Caco-2 (cell line): ENCODE measurements at regions of chr1 and their contacts with region 1.

Region 1: GRCh38 chr1:158458263-158458662 is 3.4 kb upstream of the OR10K1 start:
- DNase-seq: no peak
- H3K4me3 ChIP-seq: no peak overlapping the region
- H3K4me3 Mint-ChIP-seq: no peak overlapping the region
- H3K27ac Mint-ChIP-seq: no peak overlapping the region
- H3K4me1 ChIP-seq: no peaks in the 10 kb centered on the region
- H3K4me1 Mint-ChIP-seq: no peaks in the 10 kb centered on the region
- H3K27me3 ChIP-seq: no peaks in the 10 kb centered on the region
- H3K27me3 Mint-ChIP-seq: no peaks in the 10 kb centered on the region
- CTCF ChIP-seq: no peak

Region 2: GRCh38 chr1:158445376-158445775 is 12.9 kb before region 1 on chr1:
- CTCF ChIA-PET with region 1: no interaction called
- POLR2A ChIA-PET with region 1: no interaction called
- intact Hi-C with region 1: no loop called
- DNase-seq: no peak
- H3K4me3 ChIP-seq: no peak overlapping the region
- H3K4me3 Mint-ChIP-seq: no peak overlapping the region
- H3K27ac Mint-ChIP-seq: no peak overlapping the region
- H3K4me1 ChIP-seq: no peaks in the 10 kb centered on the region
- H3K4me1 Mint-ChIP-seq: no peaks in the 10 kb centered on the region
- H3K27me3 ChIP-seq: no peaks in the 10 kb centered on the region
- H3K27me3 Mint-ChIP-seq: no peaks in the 10 kb centered on the region
- CTCF ChIP-seq: no peak

Region 3: GRCh38 chr1:158506369-158506987 is 48.2 kb after region 1 on chr1:
- CTCF ChIA-PET with region 1: no interaction called
- POLR2A ChIA-PET with region 1: no interaction called
- intact Hi-C with region 1: no loop called
- DNase-seq: peak; percentile 37 to 41
- H3K4me3 ChIP-seq: no peak overlapping the region
- H3K4me3 Mint-ChIP-seq: no peak overlapping the region
- H3K27ac Mint-ChIP-seq: no peak overlapping the region
- H3K4me1 ChIP-seq: no peaks in the 10 kb centered on the region
- H3K4me1 Mint-ChIP-seq: no peaks in the 10 kb centered on the region
- H3K27me3 ChIP-seq: no peaks in the 10 kb centered on the region; the same call in 1 of the 2 replicates
- H3K27me3 Mint-ChIP-seq: peaks cover 2% of the 10 kb centered on the region
- CTCF ChIP-seq: peak; percentile 29 to 36

Region 4: DNA sequence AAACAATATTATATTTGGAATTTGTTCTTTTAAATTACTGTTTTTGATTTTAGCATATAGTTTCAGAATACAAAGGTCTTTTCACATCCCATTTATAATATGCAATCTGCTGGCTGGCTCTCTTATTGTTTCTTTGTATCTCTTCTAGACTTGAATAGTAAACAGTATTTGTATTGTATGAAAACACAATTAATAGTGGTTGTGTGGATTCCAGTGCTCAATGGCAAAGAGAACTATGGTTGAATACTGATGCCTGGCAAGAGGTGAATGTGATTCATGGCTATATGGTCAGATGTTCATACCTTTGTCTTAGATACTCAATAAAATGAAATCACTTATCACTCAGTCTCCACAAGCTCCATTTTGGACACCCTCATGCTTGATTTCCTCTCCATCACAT is 58.7 kb after region 1 on chr1:
- CTCF ChIA-PET with region 1: no interaction called
- POLR2A ChIA-PET with region 1: no interaction called
- intact Hi-C with region 1: no loop called
- DNase-seq: no peak
- H3K4me3 ChIP-seq: no peak overlapping the region
- H3K4me3 Mint-ChIP-seq: no peak overlapping the region
- H3K27ac Mint-ChIP-seq: no peak overlapping the region
- H3K4me1 ChIP-seq: no peaks in the 10 kb centered on the region
- H3K4me1 Mint-ChIP-seq: no peaks in the 10 kb centered on the region
- H3K27me3 ChIP-seq: no peaks in the 10 kb centered on the region
- H3K27me3 Mint-ChIP-seq: peaks cover 5% of the 10 kb centered on the region
- CTCF ChIP-seq: no peak

Region 5: DNA sequence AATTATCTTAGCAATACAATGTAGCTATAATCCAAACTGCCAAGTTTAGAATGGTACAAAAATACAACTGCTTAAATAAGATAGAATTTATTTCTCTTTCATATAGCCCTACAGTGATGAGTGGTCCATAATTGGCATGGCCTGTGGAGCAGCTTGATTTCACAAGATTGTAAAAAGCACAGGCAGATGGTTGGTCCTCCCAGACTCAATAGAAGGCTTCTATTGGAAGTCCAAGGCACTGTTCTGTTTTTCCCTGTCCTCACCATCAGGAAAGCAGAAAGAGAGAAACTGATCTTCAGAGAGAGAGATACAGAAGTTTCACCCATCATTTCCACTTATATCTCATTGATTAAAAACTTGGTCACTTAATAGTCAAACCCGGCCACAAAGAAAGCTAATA is 114.0 kb after region 1 on chr1:
- CTCF ChIA-PET with region 1: no interaction called
- POLR2A ChIA-PET with region 1: no interaction called
- intact Hi-C with region 1: no loop called
- DNase-seq: no peak
- H3K4me3 ChIP-seq: no peak overlapping the region
- H3K4me3 Mint-ChIP-seq: no peak overlapping the region
- H3K27ac Mint-ChIP-seq: no peak overlapping the region
- H3K4me1 ChIP-seq: no peaks in the 10 kb centered on the region
- H3K4me1 Mint-ChIP-seq: no peaks in the 10 kb centered on the region
- H3K27me3 ChIP-seq: no peaks in the 10 kb centered on the region
- H3K27me3 Mint-ChIP-seq: peaks cover 4% of the 10 kb centered on the region
- CTCF ChIP-seq: no peak

Region 6: DNA sequence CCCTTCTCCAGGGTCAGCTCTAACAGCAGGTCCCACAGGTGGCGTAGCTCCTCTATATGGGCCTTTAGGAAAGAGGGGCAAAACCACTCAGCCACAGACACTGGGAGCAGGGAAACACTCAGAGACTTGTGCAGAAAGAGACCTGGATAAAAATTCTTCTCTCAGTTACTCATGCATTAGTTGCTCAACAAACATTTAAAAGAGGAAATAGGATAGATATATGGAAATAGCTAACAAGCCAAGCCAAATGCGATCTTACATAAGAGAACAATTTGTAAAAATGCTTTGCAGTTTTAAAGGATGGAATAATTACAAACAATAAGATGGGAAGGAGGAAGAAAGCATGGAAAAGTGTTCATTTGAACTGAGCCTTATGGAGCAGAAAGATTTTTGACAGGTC is 223.3 kb after region 1 on chr1:
- CTCF ChIA-PET with region 1: no interaction called
- POLR2A ChIA-PET with region 1: no interaction called
- intact Hi-C with region 1: loop called (anchors 5 kb)
- DNase-seq: no peak
- H3K4me3 ChIP-seq: no peak overlapping the region
- H3K4me3 Mint-ChIP-seq: no peak overlapping the region
- H3K27ac Mint-ChIP-seq: no peak overlapping the region
- H3K4me1 ChIP-seq: no peaks in the 10 kb centered on the region
- H3K4me1 Mint-ChIP-seq: no peaks in the 10 kb centered on the region
- H3K27me3 ChIP-seq: no peaks in the 10 kb centered on the region
- H3K27me3 Mint-ChIP-seq: peaks cover 13% of the 10 kb centered on the region
- CTCF ChIP-seq: no peak